ENCODE measurements at regions of chr15 and their contacts with region 1.

Region 1: GRCh38 chr15:90419738-90420406 is 31.8 kb downstream of the IQGAP1 start:
- DNase-seq: peak; percentile 22
- H3K4me3 Mint-ChIP-seq: peak overlapping the region; percentile 50
- H3K27ac Mint-ChIP-seq: peak overlapping the region; percentile 92
- H3K4me1 Mint-ChIP-seq: peaks cover 63% of the 10 kb centered on the region
- H3K27me3 Mint-ChIP-seq: no peaks in the 10 kb centered on the region

Region 2: GRCh38 chr15:90376789-90377188 is 43.1 kb before region 1 on chr15:
- intact Hi-C with region 1: loop called (anchors 1 kb)
- DNase-seq: peak; percentile 69
- H3K4me3 Mint-ChIP-seq: peak overlapping the region; percentile 23
- H3K27ac Mint-ChIP-seq: peak overlapping the region; percentile 96
- H3K4me1 Mint-ChIP-seq: peaks cover 31% of the 10 kb centered on the region
- H3K27me3 Mint-ChIP-seq: no peaks in the 10 kb centered on the region

Region 3: GRCh38 chr15:90400406-90401314 is 19.2 kb before region 1 on chr15:
- intact Hi-C with region 1: loop called (anchors 1 kb)
- DNase-seq: peak; percentile 70
- H3K4me3 Mint-ChIP-seq: peak overlapping the region; percentile 68
- H3K27ac Mint-ChIP-seq: peak overlapping the region; percentile 93
- H3K4me1 Mint-ChIP-seq: peaks cover 54% of the 10 kb centered on the region
- H3K27me3 Mint-ChIP-seq: no peaks in the 10 kb centered on the region

Region 4: GRCh38 chr15:90571063-90571541 is 151.2 kb after region 1 on chr15:
- intact Hi-C with region 1: no loop called
- DNase-seq: no peak
- H3K4me3 Mint-ChIP-seq: peak overlapping the region; percentile 67
- H3K27ac Mint-ChIP-seq: peak overlapping the region; percentile 73
- H3K4me1 Mint-ChIP-seq: peaks cover 67% of the 10 kb centered on the region
- H3K27me3 Mint-ChIP-seq: no peaks in the 10 kb centered on the region

Measured in activated T-helper 2 cell treated with anti-CD3 and anti-CD28 coated beads, Interferon-gamma antibody, Interleukin-2, Interleukin-4, amounts not matched to agents 10 μg/mL and 5 μg/mL and 100 μg/mL, durations not matched to agents 14 hours and 24 hours and 36 hours (primary cell).